ENCODE measurements at regions of chr14 and their contacts with region 1.

Region 1: DNA sequence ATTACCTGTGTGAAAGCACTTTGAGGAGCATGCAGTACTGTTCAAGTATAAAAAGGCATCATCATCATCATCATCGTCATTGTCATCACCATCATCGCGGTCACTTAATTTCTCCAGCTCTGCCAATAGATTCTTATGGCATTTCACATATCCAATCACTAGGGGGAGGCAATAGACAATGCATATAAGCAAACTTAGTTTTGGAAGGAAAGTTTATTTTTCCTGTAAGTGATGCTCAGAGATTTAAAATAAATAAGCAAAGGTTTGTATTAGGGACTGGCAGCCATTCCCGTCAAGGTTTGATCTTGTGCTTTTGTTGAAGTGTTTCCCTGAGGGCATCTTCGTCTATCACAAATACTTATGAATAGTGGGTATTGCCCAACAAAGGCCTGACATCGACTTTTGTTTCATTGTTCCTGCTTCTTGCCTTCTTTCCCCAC is 127.4 kb downstream of the KTN1 start:
- DNase-seq: no peak
- H3K4me3 ChIP-seq: no peak overlapping the region
- H3K27ac ChIP-seq: no peak overlapping the region
- H3K4me1 ChIP-seq: peaks cover 0 to 3% (median 0%) of the 10 kb centered on the region in 4 donors
- H3K27me3 ChIP-seq: no peaks in the 10 kb centered on the region
- CTCF ChIP-seq: peak; percentile 21 to 66 (median 56)
- EP300 ChIP-seq: no peak
- POLR2A ChIP-seq: no peak

Region 2: GRCh38 chr14:55446218-55446654 is 261.1 kb before region 1 on chr14:
- intact Hi-C with region 1: no loop called
- DNase-seq: peak; percentile 63
- H3K4me3 ChIP-seq: no peak overlapping the region
- H3K27ac ChIP-seq: no peak overlapping the region
- H3K4me1 ChIP-seq: peaks cover 0 to 14% (median 12%) of the 10 kb centered on the region in 4 donors
- H3K27me3 ChIP-seq: no peaks in the 10 kb centered on the region
- CTCF ChIP-seq: peak in 3 of 4 experiments; percentile 49 to 55 (median 50)
- EP300 ChIP-seq: no peak
- POLR2A ChIP-seq: no peak

Region 3: GRCh38 chr14:56339855-56340701 is 632.7 kb after region 1 on chr14:
- intact Hi-C with region 1: loop called (anchors 1 kb)
- DNase-seq: peak; percentile 82
- H3K4me3 ChIP-seq: no peak overlapping the region
- H3K27ac ChIP-seq: no peak overlapping the region
- H3K4me1 ChIP-seq: peaks cover 0 to 29% (median 26%) of the 10 kb centered on the region in 4 donors
- H3K27me3 ChIP-seq: no peaks in the 10 kb centered on the region
- CTCF ChIP-seq: peak; percentile 60 to 76 (median 70)
- EP300 ChIP-seq: no peak
- POLR2A ChIP-seq: no peak

Region 4: DNA sequence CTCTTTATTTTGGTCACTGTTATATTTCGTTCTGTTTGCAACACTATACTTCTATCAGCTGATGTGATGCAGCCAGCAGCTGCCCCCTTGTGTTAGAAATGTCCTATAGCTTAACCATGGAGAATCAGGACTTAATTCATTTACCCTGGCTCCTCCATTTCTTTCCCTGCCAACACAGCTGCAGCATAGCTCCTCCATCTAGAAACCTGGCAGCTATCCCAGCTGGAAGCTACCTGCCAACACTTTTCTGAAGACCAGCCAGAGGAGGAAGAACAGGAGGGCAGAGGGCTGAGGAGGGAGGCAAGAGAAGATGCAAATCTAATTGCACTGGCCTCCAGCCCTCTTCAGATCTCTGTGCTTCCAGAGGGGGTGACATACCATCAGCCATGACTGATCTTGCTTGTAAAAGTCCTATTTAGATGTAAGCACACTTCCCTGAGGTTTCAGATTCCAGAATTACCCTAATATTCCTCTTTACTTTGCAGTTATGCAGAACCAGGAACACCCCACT is 715.4 kb after region 1 on chr14:
- intact Hi-C with region 1: loop called (anchors 5 kb)
- DNase-seq: peak; percentile 82
- H3K4me3 ChIP-seq: no peak overlapping the region
- H3K27ac ChIP-seq: no peak overlapping the region
- H3K4me1 ChIP-seq: peaks cover 0 to 21% (median 13%) of the 10 kb centered on the region in 4 donors
- H3K27me3 ChIP-seq: no peaks in the 10 kb centered on the region
- CTCF ChIP-seq: peak; percentile 35 to 67 (median 59)
- EP300 ChIP-seq: no peak
- POLR2A ChIP-seq: no peak

Region 5: DNA sequence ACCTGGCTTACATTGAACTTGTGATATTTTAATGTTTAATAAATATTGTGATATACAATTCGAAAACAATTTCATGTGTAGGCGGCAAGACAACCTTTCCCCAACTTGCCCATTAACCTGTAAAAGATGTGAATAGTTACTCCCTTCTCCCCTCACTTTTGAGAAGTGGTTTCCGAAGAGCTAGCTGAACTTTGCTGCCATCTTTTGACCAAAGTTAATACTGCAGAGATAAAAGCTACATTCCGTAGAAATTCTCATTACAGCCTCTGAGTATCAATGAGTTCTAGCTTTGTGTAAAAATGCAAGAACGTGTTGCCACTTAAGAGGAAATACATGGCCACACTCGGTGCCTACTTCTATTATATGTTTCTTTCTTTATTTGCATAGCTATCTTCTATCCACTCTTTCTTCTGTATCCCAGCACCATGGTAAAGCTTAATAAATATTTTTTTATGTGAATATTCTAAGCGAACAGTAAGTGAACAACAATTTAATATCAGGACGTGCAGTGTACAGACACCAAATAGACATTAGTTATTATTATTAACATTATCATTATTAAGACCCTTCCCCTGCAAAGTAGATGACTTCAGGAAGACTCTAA is 767.1 kb after region 1 on chr14:
- intact Hi-C with region 1: loop called (anchors 1 kb)
- DNase-seq: no peak
- H3K4me3 ChIP-seq: no peak overlapping the region
- H3K27ac ChIP-seq: no peak overlapping the region
- H3K4me1 ChIP-seq: no peaks in the 10 kb centered on the region
- H3K27me3 ChIP-seq: no peaks in the 10 kb centered on the region
- CTCF ChIP-seq: peak in 3 of 4 experiments; percentile 54 to 80 (median 64)
- EP300 ChIP-seq: no peak
- POLR2A ChIP-seq: no peak

Measured in sigmoid colon (tissue), 7 donors.